Endothelial cell of umbilical vein (primary cell): ENCODE measurements at regions of chr16 and their contacts with region 1.

Region 1: DNA sequence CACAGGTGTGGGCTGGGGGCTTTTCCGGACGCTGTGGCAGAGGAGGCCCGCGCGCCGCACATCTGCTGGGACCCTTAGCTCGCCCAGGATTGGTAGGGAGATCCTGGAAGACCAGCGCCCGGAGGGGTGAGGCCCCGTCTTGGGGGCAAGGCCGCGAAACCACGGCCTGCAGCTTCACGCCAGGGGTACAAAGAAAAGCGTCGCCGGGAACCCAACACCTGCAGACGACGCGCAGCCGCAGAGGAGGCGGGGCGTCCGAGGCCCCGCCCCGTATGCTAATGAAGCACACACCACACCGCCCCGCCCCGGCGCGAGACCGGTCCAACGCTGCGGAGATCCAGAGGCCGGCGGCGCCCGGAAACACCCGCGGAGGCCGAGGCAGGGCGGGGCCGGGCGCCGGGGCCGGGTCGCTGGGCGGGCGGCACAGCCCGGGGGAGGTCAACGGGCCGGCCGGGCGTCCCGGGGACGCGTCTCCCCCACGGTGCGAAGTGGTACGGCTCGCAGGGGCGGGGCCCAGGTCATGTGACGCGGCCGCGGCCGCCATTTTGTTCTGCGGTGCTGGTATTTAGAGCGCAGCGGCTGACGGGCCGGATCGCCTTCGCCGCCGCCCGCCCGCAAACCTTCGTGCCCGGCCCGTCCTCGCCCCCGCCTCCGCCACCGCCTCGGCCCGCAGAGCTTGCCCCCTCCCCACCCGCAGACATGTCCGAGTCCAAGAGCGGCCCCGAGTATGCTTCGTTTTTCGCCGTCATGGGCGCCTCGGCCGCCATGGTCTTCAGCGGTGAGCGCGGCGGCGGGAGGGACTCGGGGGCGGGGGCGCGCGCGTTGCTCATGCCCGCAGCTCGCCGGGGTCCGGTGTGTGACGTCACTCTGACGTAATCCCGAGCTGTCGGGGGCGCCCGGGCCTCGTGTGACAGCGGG is at the start of gene ATP6V0C:
- DNase-seq: peak; percentile 76
- H3K4me3 ChIP-seq: peak within 1 kb of the TSS; percentile 52 to 91 (median 73)
- H3K27ac ChIP-seq: peak within 1 kb of the TSS; percentile 72
- H3K4me1 ChIP-seq: peaks cover 23% of the 10 kb centered on the region
- H3K27me3 ChIP-seq: no peaks in the 10 kb centered on the region
- CTCF ChIP-seq: no peak
- POLR2A ChIP-seq: peak; percentile 96
- total RNA-seq, gene ATP6V0C: 187 and 194 TPM in 2 replicates

Region 2: DNA sequence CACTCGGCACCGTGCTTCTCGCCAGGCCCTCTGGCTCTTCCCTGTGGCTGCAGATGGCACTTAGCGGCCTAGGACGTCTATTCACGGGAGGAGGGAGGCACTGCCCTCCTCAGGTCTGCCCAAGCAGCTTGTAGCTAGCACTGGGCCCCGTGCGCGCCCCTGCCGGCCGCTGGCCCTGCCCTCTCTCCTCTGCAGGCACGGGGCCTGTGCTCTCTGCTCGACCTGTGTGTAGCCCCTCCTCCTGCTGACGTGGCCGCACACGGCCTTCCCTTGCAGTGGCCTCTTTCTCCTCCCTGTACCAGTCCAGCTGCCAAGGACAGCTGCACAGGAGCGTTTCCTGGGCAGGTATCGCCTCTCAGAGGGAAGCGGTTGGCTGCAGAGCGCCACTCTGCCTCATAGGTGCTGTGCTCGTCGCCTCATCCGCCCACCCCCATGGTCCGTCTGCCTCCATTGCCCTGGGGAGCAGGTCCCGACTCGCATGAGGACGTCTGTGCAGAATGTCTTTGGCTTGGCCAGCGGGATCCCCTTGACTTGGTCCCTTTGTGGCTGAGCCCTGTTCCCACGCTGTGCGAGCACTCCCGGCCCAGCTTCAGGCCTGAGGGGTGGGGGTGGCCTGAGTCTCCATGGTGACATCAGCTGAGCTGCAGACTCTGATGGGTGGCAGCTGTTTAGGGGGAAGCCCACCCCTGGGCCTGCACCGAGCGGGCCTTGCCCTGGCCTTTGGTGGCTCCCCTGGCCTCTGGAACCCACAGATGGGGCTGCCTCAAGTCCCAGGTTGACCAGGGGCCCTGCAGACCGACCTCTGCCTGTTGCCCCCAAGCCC is 431.3 kb before region 1 on chr16:
- CTCF ChIA-PET with region 1: no interaction called
- POLR2A ChIA-PET with region 1: no interaction called
- dilution Hi-C with region 1: no loop called
- intact Hi-C with region 1: no loop called
- DNase-seq: no peak
- H3K4me3 ChIP-seq: no peak overlapping the region
- H3K27ac ChIP-seq: no peak overlapping the region
- H3K4me1 ChIP-seq: no peaks in the 10 kb centered on the region
- H3K27me3 ChIP-seq: no peaks in the 10 kb centered on the region
- CTCF ChIP-seq: no peak
- POLR2A ChIP-seq: no peak

Region 3: GRCh38 chr16:2486645-2487516 is 26.8 kb before region 1 on chr16:
- CTCF ChIA-PET with region 1: no interaction called
- POLR2A ChIA-PET with region 1: no interaction called
- dilution Hi-C with region 1: no loop called
- intact Hi-C with region 1: loop called (anchors 1 kb)
- DNase-seq: no peak
- H3K4me3 ChIP-seq: no peak overlapping the region
- H3K27ac ChIP-seq: no peak overlapping the region
- H3K4me1 ChIP-seq: no peaks in the 10 kb centered on the region
- H3K27me3 ChIP-seq: no peaks in the 10 kb centered on the region
- CTCF ChIP-seq: no peak
- POLR2A ChIP-seq: no peak